Gastrocnemius medialis (tissue), 4 donors: ENCODE measurements at regions of chr2 and their contacts with region 1.

Region 1: DNA sequence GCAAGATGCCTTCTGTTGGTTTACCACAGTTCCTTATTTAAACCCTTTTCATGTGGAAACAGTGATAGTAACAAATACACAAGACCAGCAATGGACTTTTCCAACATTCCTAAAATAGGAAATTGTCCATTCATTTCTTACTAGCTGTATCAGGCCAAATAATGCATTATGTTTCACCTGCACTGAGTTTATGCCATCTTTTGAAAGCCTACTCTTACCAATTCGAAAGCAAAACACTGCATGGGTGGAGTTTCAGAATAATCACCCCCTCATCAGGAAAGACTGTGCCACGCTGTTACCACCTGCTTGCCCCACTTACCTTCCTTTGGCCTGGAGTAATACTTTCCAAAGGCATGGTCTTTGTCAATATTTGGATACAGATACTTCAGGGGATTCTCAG is 37.5 kb downstream of the STAT1 start:
- DNase-seq: no peak
- ATAC-seq: no peak
- H3K4me3 ChIP-seq: no peak overlapping the region
- H3K27ac ChIP-seq: no peak overlapping the region
- H3K4me1 ChIP-seq: peaks cover 0 to 8% of the 10 kb centered on the region in 2 donors
- H3K27me3 ChIP-seq: no peaks in the 10 kb centered on the region
- CTCF ChIP-seq: no peak
- POLR2A ChIP-seq: no peak

Region 2: GRCh38 chr2:190718652-190719526 is 257.6 kb before region 1 on chr2:
- in situ Hi-C with region 1: no loop called
- intact Hi-C with region 1: no loop called
- DNase-seq: peak; percentile 14 to 40
- ATAC-seq: peak; percentile 82 to 85
- H3K4me3 ChIP-seq: no peak overlapping the region
- H3K27ac ChIP-seq: no peak overlapping the region
- H3K4me1 ChIP-seq: peaks cover 4 to 10% of the 10 kb centered on the region in 2 donors
- H3K27me3 ChIP-seq: no peaks in the 10 kb centered on the region
- CTCF ChIP-seq: no peak
- POLR2A ChIP-seq: no peak

Region 3: GRCh38 chr2:190990132-190990531 is 13.6 kb after region 1 on chr2:
- in situ Hi-C with region 1: no loop called
- intact Hi-C with region 1: loop called (anchors 2 kb)
- DNase-seq: no peak
- ATAC-seq: no peak
- H3K4me3 ChIP-seq: no peak overlapping the region
- H3K27ac ChIP-seq: no peak overlapping the region
- H3K4me1 ChIP-seq: peaks cover 0 to 4% of the 10 kb centered on the region in 2 donors
- H3K27me3 ChIP-seq: no peaks in the 10 kb centered on the region
- CTCF ChIP-seq: no peak
- POLR2A ChIP-seq: no peak